Activated T-helper 1 cell treated with anti-CD3 and anti-CD28 coated beads, Interleukin-12 subunit alpha, Interleukin-12 subunit beta, Interleukin-2, Interleukin-4 antibody, amounts not matched to agents 30 ng/mL and 10 ng/mL and 1 ng/mL, durations not matched to agents 14 hours and 24 hours and 36 hours (primary cell): ENCODE measurements at regions of chr7 and their contacts with region 1.

Region 1: GRCh38 chr7:98106647-98107445 is at the start of gene LMTK2:
- DNase-seq: peak; percentile 94
- H3K4me3 Mint-ChIP-seq: peak within 1 kb of the TSS; percentile 96
- H3K27ac Mint-ChIP-seq: peak within 1 kb of the TSS; percentile 88
- H3K4me1 Mint-ChIP-seq: peaks cover 27% of the 10 kb centered on the region
- H3K27me3 Mint-ChIP-seq: no peaks in the 10 kb centered on the region
- total RNA-seq, gene LMTK2: 14.9 and 17.7 TPM in 2 replicates

Region 2: GRCh38 chr7:97117372-97118188 is 989.3 kb before region 1 on chr7 and contains the start of gene SDHAF3:
- intact Hi-C with region 1: loop called (anchors 5 kb)
- DNase-seq: peak; percentile 97
- H3K4me3 Mint-ChIP-seq: peak within 1 kb of the TSS; percentile 94
- H3K27ac Mint-ChIP-seq: peak within 1 kb of the TSS; percentile 91
- H3K4me1 Mint-ChIP-seq: peaks cover 37% of the 10 kb centered on the region
- H3K27me3 Mint-ChIP-seq: no peaks in the 10 kb centered on the region
- total RNA-seq, gene SDHAF3: 24.1 and 25.4 TPM in 2 replicates

Region 3: GRCh38 chr7:97971990-97972943 is 134.6 kb before region 1 on chr7:
- intact Hi-C with region 1: loop called (anchors 1 kb)
- DNase-seq: peak; percentile 80
- H3K4me3 Mint-ChIP-seq: peak overlapping the region; percentile 99
- H3K27ac Mint-ChIP-seq: peak overlapping the region; percentile 94
- H3K4me1 Mint-ChIP-seq: peaks cover 13% of the 10 kb centered on the region
- H3K27me3 Mint-ChIP-seq: peaks cover 4% of the 10 kb centered on the region

Region 4: DNA sequence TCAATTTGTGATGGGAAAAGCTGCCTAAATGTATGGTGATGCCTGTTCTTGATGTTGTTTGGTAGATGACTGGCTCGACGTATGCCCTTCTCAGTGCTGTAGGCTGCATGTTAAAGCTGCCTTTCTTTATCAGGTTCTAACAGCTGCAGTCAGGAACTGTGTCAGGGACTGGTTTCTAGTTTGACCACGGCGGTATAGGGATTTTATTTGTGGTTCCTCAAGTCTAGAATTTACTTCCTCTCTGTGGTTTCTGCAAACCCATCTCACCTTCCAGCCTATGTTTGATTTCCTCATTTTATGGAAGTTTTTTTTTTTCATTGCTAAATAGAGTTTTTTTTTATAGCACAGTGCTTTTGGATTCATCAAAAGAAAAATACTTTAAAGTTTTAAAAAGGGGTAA is 26.3 kb after region 1 on chr7:
- intact Hi-C with region 1: loop called (anchors 1 kb)
- DNase-seq: peak; percentile 13
- H3K4me3 Mint-ChIP-seq: peak overlapping the region; percentile 61
- H3K27ac Mint-ChIP-seq: peak overlapping the region; percentile 37
- H3K4me1 Mint-ChIP-seq: peaks cover 39% of the 10 kb centered on the region
- H3K27me3 Mint-ChIP-seq: peaks cover 2% of the 10 kb centered on the region

Region 5: GRCh38 chr7:98251841-98252639 is 145.2 kb after region 1 on chr7 and contains the start of gene TECPR1:
- intact Hi-C with region 1: loop called (anchors 1 kb)
- DNase-seq: peak; percentile 91
- H3K4me3 Mint-ChIP-seq: peak within 1 kb of the TSS; percentile 98
- H3K27ac Mint-ChIP-seq: peak within 1 kb of the TSS; percentile 99
- H3K4me1 Mint-ChIP-seq: peaks cover 44% of the 10 kb centered on the region
- H3K27me3 Mint-ChIP-seq: no peaks in the 10 kb centered on the region
- total RNA-seq, gene TECPR1: 49.1 and 53.6 TPM in 2 replicates

Region 6: GRCh38 chr7:98878365-98879165 is 771.7 kb after region 1 on chr7 and contains the start of gene TRRAP:
- intact Hi-C with region 1: loop called (anchors 5 kb)
- DNase-seq: peak; percentile 70
- H3K4me3 Mint-ChIP-seq: peak within 1 kb of the TSS; percentile 95
- H3K27ac Mint-ChIP-seq: peak within 1 kb of the TSS; percentile 92
- H3K4me1 Mint-ChIP-seq: peaks cover 13% of the 10 kb centered on the region
- H3K27me3 Mint-ChIP-seq: peaks cover 10% of the 10 kb centered on the region
- total RNA-seq, gene TRRAP: 66.9 and 69.6 TPM in 2 replicates